ENCODE measurements at regions of chr1 and their contacts with region 1.

Region 1: DNA sequence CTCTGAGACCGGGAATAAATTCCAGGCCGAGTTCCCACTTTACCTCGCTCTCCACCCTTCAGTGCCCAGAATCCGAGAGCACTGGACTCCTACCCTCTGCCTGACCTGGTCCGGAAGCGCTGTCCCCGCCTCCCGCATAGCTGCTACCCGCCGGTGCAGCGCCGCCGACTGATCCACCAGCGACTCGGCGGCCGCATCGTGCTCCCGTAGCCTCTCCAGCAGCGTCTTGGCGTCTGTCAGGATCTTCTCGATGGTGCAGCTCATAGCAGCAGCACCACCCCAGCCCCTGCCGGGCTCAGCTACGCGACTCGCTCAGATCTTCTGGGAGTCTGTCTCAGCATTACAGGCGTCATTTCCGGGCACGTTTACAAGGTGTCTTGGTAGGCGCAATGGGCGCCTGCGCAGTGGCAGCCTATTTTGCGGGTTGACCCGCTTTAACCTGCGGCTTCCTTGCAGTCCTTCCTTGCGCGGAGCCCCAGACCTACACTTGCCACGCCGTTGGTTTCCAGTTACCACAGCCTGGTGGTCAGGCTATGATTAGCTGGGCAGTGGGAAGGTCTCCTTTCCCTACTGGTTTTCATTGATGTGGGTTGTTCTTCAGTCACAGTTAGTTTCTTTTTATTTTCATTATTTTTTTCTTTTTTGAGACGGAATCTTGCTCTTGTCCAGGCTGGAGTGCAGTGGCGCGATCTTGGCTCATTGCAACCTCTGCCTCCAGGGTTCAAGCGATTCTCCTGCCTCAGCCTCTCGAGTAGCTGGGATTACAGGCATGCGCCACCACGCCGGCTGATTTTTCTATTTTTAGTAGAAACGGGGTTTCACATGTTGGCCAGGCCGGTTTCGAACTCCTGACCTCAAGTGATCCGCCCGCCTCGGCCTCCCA is at the start of gene SIKE1:
- DNase-seq: peak; percentile 96

Region 2: GRCh38 chr1:114729782-114730181 is 50.8 kb before region 1 on chr1:
- CTCF ChIA-PET with region 1: no interaction called
- POLR2A ChIA-PET with region 1: no interaction called
- DNase-seq: no peak

Region 3: GRCh38 chr1:114757455-114758250 is 22.9 kb before region 1 on chr1 and contains the start of gene CSDE1:
- CTCF ChIA-PET with region 1: no interaction called
- POLR2A ChIA-PET with region 1: interaction called, 11 read pairs
- DNase-seq: peak; percentile 98

Measured in HEK293T (cell line).